Activated B cell treated with CpG ODN at 0.5 μM for 24 hours (primary cell): ENCODE measurements at regions of chr20 and their contacts with region 1.

Region 1: DNA sequence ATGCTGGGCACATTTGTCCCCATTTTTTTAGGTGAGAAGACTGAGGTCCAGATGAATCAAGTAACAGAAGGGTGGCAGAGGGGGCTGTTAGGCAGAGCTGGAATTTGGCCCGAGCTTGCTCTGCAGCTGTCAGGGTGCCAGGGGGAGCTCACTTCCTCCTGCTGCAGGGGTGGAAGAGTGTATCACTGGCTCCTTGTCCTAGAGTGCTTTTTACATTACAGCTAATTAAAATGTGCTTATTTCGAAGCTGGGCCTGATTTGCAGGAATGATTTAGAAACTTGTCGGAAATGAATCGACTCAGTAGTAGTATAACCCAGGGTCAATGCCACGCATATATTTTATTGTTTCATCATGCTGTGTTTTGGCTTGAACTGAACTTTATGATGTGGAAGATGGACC is 11.1 kb downstream of the TOX2 start:
- DNase-seq: no peak
- ATAC-seq: peak; percentile 55
- H3K4me3 Mint-ChIP-seq: peak overlapping the region; percentile 25
- H3K27ac Mint-ChIP-seq: no peak overlapping the region
- H3K4me1 Mint-ChIP-seq: peaks cover 30% of the 10 kb centered on the region
- H3K27me3 Mint-ChIP-seq: peaks cover 10% of the 10 kb centered on the region
- CTCF ChIP-seq: no peak

Region 2: DNA sequence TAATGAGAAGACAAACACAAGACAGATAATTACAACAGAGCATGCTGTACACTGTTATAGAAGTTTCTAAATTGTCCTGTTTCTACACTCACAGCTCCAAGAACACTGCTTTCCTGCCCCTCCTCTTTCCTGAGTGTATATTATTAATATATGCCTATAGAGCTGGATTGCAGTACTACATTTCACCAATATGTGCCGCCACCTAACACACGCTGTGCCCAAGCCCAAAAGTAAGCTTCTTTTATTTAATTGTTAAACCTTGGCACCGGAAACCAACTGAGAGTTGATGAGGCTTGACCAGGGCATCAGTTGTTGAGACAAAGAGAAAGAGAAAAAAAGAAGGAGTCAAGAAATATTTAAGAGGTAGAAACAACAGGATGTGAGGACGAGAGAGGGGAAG is 720.1 kb before region 1 on chr20:
- CTCF ChIA-PET with region 1: no interaction called
- POLR2A ChIA-PET with region 1: no interaction called
- intact Hi-C with region 1: no loop called
- DNase-seq: no peak
- ATAC-seq: no peak
- H3K4me3 Mint-ChIP-seq: no peak overlapping the region
- H3K27ac Mint-ChIP-seq: no peak overlapping the region
- H3K4me1 Mint-ChIP-seq: no peaks in the 10 kb centered on the region
- H3K27me3 Mint-ChIP-seq: no peaks in the 10 kb centered on the region
- CTCF ChIP-seq: no peak

Region 3: GRCh38 chr20:43761386-43762340 is 164.1 kb before region 1 on chr20:
- CTCF ChIA-PET with region 1: no interaction called
- POLR2A ChIA-PET with region 1: interaction called, 10 read pairs
- intact Hi-C with region 1: no loop called
- DNase-seq: no peak
- ATAC-seq: no peak
- H3K4me3 Mint-ChIP-seq: no peak overlapping the region
- H3K27ac Mint-ChIP-seq: no peak overlapping the region
- H3K4me1 Mint-ChIP-seq: no peaks in the 10 kb centered on the region
- H3K27me3 Mint-ChIP-seq: peaks cover 1% of the 10 kb centered on the region
- CTCF ChIP-seq: no peak

Region 4: GRCh38 chr20:43942661-43943290 is 17.0 kb after region 1 on chr20:
- CTCF ChIA-PET with region 1: interaction called, 3 read pairs
- POLR2A ChIA-PET with region 1: no interaction called
- intact Hi-C with region 1: loop called (anchors 2 kb)
- DNase-seq: no peak
- ATAC-seq: peak; percentile 63
- H3K4me3 Mint-ChIP-seq: peak overlapping the region; percentile 33
- H3K27ac Mint-ChIP-seq: peak overlapping the region; percentile 84
- H3K4me1 Mint-ChIP-seq: peaks cover 23% of the 10 kb centered on the region
- H3K27me3 Mint-ChIP-seq: no peaks in the 10 kb centered on the region
- CTCF ChIP-seq: no peak

Region 5: DNA sequence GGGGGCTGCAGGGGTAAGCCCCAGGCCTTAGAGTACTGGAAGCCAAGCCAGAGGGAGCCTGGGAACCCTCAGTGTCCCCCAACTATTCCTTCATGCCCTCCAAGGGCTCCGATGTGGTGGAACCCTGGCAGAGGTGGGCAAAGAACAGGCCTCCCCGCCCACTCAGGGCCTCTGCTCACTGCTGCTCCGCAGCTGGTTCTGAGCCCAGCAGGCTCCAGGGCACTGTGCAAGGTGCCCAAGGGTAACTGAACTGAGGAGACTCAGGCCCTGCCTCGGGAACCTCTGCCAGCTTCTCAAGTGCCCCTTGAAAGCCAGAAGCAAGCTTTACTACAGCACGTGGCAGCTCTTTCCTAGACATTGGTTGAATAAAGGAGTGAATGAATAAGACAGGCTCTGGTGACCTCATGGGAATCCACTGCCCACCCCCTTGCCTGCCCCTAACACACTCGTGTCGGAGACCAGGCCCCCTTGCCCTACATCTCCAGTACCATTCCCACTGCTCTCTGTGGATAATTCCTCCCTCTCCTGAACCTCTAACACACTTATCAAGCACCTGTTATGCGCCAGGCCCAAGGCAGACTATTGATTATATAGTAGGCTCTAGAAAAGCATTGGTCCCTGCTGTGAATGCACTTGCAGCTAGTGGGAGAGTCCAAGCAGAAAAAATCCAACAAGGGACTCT is 43.8 kb after region 1 on chr20:
- CTCF ChIA-PET with region 1: no interaction called
- POLR2A ChIA-PET with region 1: no interaction called
- intact Hi-C with region 1: no loop called
- DNase-seq: no peak
- ATAC-seq: no peak
- H3K4me3 Mint-ChIP-seq: no peak overlapping the region
- H3K27ac Mint-ChIP-seq: no peak overlapping the region
- H3K4me1 Mint-ChIP-seq: peaks cover under 1% of the 10 kb centered on the region
- H3K27me3 Mint-ChIP-seq: peaks cover 3% of the 10 kb centered on the region
- CTCF ChIP-seq: no peak

Region 6: DNA sequence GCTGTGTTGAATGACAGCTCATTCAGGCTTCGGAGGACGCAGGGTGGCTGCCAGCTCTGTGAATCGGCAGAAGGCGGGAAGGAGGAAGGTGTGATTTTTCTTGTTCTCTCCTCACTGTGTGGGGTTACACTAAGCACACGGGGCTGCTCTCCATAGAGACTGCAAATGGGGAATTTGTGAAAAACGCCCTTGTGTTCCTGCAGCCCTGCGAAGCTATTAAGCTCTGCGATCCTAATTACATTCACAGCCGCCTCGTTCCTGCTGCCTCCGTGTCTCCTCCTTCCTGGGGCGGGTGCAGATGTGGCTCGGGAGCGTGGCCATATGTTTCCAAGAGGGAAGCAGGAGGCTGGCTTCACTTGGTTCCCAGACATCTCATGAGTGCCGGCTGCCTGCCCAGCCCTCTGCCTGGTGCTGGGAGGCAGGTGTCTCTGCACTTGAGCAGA is 112.9 kb after region 1 on chr20:
- CTCF ChIA-PET with region 1: no interaction called
- POLR2A ChIA-PET with region 1: no interaction called
- intact Hi-C with region 1: no loop called
- DNase-seq: no peak
- ATAC-seq: no peak
- H3K4me3 Mint-ChIP-seq: no peak overlapping the region
- H3K27ac Mint-ChIP-seq: no peak overlapping the region
- H3K4me1 Mint-ChIP-seq: no peaks in the 10 kb centered on the region
- H3K27me3 Mint-ChIP-seq: peaks cover 23% of the 10 kb centered on the region
- CTCF ChIP-seq: no peak

Region 7: DNA sequence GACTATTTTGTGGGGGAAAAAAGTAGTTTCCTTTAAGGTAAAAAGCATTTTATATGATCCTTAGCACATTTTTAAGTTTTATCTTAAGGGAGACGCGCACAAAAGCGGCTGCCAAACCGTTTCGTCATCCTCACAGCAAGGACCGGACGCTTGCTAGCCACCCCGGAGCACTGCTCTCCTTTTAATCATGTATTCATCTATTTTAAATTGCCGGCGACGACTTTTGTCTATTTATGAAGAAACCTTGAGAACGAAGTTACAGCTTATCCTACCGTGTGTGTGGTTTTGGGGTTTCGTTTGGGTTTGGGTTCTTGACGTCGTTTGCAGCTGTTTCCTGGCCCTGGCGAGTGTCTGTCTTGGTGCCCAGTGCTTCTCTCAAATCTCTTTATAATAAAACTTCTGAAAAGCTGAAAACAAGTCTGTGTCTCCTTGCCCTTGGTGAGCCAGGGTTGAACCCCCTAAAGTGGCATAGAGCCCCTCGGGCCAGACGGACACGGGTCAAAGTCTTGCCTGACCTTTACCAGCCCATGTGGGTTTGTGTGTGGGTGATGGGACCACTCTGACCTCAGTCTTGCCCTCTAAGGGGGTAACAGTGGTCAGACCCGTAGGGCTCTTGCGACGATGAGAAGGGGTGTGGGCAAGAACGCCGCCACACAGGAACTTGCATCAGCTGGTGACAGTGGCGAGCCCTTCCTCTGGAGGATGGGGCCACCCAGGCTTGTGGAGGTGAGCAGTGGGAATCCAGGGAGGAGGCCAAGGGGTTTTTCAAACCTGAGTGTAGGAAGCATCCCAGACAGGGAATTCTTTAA is 143.6 kb after region 1 on chr20:
- CTCF ChIA-PET with region 1: no interaction called
- POLR2A ChIA-PET with region 1: no interaction called
- intact Hi-C with region 1: loop called (anchors 2 kb)
- DNase-seq: peak; percentile 44
- ATAC-seq: peak; percentile 60
- H3K4me3 Mint-ChIP-seq: peak overlapping the region; percentile 80
- H3K27ac Mint-ChIP-seq: peak overlapping the region; percentile 88
- H3K4me1 Mint-ChIP-seq: peaks cover 39% of the 10 kb centered on the region
- H3K27me3 Mint-ChIP-seq: peaks cover 5% of the 10 kb centered on the region
- CTCF ChIP-seq: no peak

Region 8: GRCh38 chr20:44123251-44123650 is 197.4 kb after region 1 on chr20:
- CTCF ChIA-PET with region 1: no interaction called
- POLR2A ChIA-PET with region 1: no interaction called
- intact Hi-C with region 1: no loop called
- DNase-seq: no peak
- ATAC-seq: no peak
- H3K4me3 Mint-ChIP-seq: no peak overlapping the region
- H3K27ac Mint-ChIP-seq: no peak overlapping the region
- H3K4me1 Mint-ChIP-seq: no peaks in the 10 kb centered on the region
- H3K27me3 Mint-ChIP-seq: peaks cover 20% of the 10 kb centered on the region
- CTCF ChIP-seq: no peak